ENCODE measurements at regions of chr7 and their contacts with region 1.

Region 1: GRCh38 chr7:30276203-30276900 is 8.0 kb upstream of the ZNRF2 start:
- DNase-seq: peak; percentile 82
- ATAC-seq: peak; percentile 93
- H3K4me3 ChIP-seq: no peak overlapping the region
- H3K27ac ChIP-seq: no peak overlapping the region
- H3K4me1 ChIP-seq: no peaks in the 10 kb centered on the region
- H3K27me3 ChIP-seq: no peaks in the 10 kb centered on the region
- CTCF ChIP-seq: peak; percentile 87

Region 2: DNA sequence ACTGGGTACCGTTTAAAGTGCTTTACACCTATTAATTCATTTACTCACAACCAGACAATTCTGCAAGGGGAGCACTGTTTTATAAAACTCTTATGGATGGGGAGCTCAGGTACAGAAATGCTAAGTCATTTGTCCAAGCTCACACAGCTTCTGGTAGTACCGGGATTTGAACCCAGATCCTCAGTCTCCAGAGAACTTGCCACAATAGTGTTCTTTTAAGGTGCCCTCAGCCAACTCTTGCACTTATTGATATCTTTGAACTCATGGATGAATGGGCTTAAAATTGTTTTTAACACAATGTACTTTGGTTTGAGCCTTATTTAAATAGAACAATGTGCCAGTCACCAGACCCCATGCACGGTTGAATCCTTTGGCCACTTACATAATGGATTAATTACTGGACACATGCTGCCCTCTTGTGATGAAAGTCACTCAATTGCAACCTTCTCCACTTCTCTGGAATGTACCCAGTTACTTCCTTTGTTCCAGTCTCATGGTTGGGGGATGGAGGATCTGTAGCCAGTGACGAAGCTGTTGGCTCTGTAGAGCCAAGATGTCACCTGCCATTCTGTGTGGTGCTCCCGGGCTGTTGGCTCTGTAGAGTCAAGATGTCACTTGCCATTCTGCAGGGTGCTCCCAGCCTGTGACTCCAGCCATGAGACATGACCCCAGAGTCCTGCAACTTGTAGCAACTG is 136.6 kb after region 1 on chr7:
- CTCF ChIA-PET with region 1: interaction called, 4 read pairs
- POLR2A ChIA-PET with region 1: no interaction called
- intact Hi-C with region 1: loop called (anchors 1 kb)
- DNase-seq: peak; percentile 85
- ATAC-seq: peak; percentile 95
- H3K4me3 ChIP-seq: no peak overlapping the region
- H3K27ac ChIP-seq: no peak overlapping the region
- H3K4me1 ChIP-seq: no peaks in the 10 kb centered on the region
- H3K27me3 ChIP-seq: no peaks in the 10 kb centered on the region
- CTCF ChIP-seq: peak; percentile 83

Measured in PC-3 (cell line).